PC-9 (cell line): ENCODE measurements at regions of chr12 and their contacts with region 1.

Region 1: DNA sequence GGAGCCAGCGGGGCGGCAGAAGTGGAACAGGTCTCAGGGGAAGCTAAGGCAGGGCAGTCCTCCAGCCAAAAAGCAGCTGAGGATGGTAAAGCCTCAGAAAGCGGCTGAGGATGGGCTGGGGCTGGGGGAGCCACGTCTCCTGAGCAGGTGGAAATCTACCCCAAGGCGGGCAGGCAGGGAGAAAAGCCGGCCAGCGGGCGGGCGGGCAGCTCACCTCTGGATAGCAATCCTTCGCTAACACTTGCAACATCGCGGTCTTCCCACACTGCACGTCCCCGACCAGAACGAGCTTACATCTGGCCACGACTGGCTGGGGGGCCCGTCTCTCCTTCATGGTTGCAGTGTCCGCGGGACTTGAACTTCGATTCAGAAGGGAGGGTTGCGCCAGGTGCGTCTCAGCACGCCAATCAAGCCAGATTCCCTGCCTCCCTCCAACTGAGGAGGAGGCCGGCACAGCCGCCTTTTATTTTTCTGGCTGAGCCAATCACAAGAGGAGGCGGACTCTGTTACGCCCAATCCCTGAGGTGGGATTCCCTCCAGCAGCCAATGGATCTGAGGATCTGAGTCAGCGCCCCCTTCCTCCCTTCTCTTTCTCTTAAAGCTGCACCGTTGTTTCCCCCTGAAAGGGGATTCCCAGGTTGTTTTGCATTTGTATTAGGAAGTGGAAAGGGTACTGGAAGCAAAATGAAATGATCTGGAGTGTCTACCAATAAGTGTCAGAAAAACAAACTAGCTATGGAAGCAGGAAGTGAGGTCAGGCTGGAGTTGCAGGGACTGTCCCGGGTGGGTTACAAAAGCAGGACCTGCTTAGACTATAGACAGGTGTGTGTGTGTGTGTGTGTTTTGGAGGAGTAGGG is at the start of gene RND1:
- DNase-seq: peak; percentile 83 to 87
- H3K4me3 ChIP-seq: peak within 1 kb of the TSS; percentile 56
- H3K27ac ChIP-seq: 0 out of 2 replicates have a peak within 1 kb of the TSS, but pooled peaks have one; percentile 36
- H3K4me1 ChIP-seq: peaks cover 20% of the 10 kb centered on the region
- H3K27me3 ChIP-seq: 0 out of 2 replicates have a peak, but pooled peaks cover 4% of the 10 kb centered on the region
- CTCF ChIP-seq: no peak
- total RNA-seq, gene RND1: 2.7 and 4.0 TPM in 2 replicates

Region 2: GRCh38 chr12:48838048-48838447 is 27.6 kb before region 1 on chr12:
- CTCF ChIA-PET with region 1: no interaction called
- POLR2A ChIA-PET with region 1: no interaction called
- intact Hi-C with region 1: no loop called
- DNase-seq: no peak
- H3K4me3 ChIP-seq: no peak overlapping the region
- H3K27ac ChIP-seq: no peak overlapping the region
- H3K4me1 ChIP-seq: no peaks in the 10 kb centered on the region
- H3K27me3 ChIP-seq: no peaks in the 10 kb centered on the region
- CTCF ChIP-seq: no peak

Region 3: GRCh38 chr12:48882315-48882687 is 16.6 kb after region 1 on chr12:
- CTCF ChIA-PET with region 1: interaction called, 4 read pairs
- POLR2A ChIA-PET with region 1: interaction called, 4 read pairs
- intact Hi-C with region 1: loop called (anchors 1 kb)
- DNase-seq: peak; percentile 45 to 52
- H3K4me3 ChIP-seq: peak overlapping the region; percentile 43; the same call in 1 of the 2 replicates
- H3K27ac ChIP-seq: peak overlapping the region; percentile 79
- H3K4me1 ChIP-seq: peaks cover 30% of the 10 kb centered on the region
- H3K27me3 ChIP-seq: no peaks in the 10 kb centered on the region
- CTCF ChIP-seq: no peak